ENCODE measurements at regions of chr13 and their contacts with region 1.

Region 1: GRCh38 chr13:91247768-91248167 is 99.7 kb upstream of the MIR17HG start:
- DNase-seq: peak; percentile 41 to 69 (median 58)
- H3K4me3 ChIP-seq: no peak overlapping the region
- H3K27ac ChIP-seq: no peak overlapping the region
- H3K4me1 ChIP-seq: peaks cover 16 to 68% (median 31%) of the 10 kb centered on the region in 4 experiments
- H3K27me3 ChIP-seq: no peaks in the 10 kb centered on the region

Region 2: DNA sequence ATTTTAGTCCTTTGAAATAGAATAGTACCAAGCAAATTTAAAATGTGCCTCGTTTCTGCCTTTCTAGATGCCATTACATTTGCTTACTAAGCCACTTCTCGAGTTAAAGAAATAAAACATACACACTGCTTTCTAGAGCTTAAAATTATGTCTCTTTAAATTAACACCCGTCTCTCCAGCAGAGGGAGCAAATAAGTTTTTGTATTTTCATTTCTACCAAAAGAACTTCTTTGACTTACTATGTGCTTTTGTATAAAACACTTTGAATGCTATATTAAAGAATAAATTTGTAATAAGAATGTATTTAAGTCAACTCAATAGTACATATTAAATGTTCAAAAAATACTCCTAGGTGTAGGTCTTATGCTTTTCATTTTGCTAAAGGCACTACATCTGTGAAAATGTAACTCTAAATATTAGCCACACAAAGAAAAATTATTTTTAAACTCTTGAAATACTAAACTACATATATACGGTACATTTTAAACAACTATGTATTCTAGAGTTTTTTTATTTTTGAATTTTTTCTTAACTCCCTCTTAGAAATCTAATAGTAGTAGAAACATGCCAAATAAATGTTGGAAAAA is 169.6 kb before region 1 on chr13:
- CTCF ChIA-PET with region 1: interaction called, 40 read pairs
- POLR2A ChIA-PET with region 1: no interaction called
- DNase-seq: peak; percentile 47 to 72 (median 62)
- H3K4me3 ChIP-seq: no peak overlapping the region
- H3K27ac ChIP-seq: no peak overlapping the region
- H3K4me1 ChIP-seq: no peaks in the 10 kb centered on the region
- H3K27me3 ChIP-seq: no peaks in the 10 kb centered on the region

Region 3: DNA sequence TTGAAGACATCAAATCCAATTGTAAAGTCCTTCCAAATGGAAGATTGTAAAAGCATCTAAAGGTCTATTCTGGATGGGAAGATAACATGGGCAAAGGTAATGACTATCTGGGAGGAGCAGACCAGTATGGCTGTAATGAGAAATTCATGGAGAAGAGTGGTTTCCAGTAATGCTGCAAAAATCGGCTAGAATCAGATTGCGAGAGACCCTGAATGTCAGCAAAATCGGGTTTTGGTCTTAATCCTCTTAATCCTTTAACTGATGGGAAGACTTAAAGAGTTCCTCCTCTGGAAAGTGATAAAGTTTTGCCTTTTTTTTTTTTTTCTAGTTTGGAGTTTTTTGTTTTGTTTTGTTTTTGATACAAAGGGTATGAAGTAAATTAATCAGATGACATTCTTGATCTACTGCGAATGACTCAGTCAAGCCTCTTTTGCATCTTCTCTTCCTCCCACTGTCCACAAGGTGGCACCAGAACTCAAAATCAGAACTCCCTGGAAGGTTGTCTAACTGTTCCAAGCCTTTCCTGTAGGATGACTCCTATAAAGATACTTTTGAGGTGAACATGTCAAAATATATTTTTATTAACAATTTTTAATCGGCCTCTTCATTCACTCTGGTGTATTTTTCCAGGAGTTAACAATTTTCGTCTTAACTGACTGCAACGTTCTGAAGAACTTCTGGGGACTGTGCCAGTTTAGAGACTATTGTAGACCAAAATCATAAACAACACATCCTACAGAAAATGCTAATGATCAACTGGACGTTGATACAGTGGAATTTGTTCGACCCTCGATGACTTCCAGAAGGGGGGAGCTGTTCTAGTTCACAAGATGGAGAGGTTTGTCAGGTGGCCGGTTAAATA is 113.6 kb before region 1 on chr13:
- CTCF ChIA-PET with region 1: interaction called, 47 read pairs
- POLR2A ChIA-PET with region 1: no interaction called
- DNase-seq: peak; percentile 65 to 67 (median 67)
- H3K4me3 ChIP-seq: peak overlapping the region in 4 of 7 experiments; percentile 30 to 74 (median 65)
- H3K27ac ChIP-seq: peak overlapping the region in 1 of 2 experiments; percentile 7
- H3K4me1 ChIP-seq: peaks cover 6 to 32% (median 10%) of the 10 kb centered on the region in 4 experiments
- H3K27me3 ChIP-seq: no peaks in the 10 kb centered on the region

Region 4: GRCh38 chr13:91216928-91217690 is 30.7 kb before region 1 on chr13:
- CTCF ChIA-PET with region 1: interaction called, 17 read pairs
- POLR2A ChIA-PET with region 1: interaction called, 4 read pairs
- DNase-seq: no peak
- H3K4me3 ChIP-seq: no peak overlapping the region
- H3K27ac ChIP-seq: no peak overlapping the region
- H3K4me1 ChIP-seq: peaks cover 19 to 74% (median 33%) of the 10 kb centered on the region in 4 experiments
- H3K27me3 ChIP-seq: no peaks in the 10 kb centered on the region

Region 5: DNA sequence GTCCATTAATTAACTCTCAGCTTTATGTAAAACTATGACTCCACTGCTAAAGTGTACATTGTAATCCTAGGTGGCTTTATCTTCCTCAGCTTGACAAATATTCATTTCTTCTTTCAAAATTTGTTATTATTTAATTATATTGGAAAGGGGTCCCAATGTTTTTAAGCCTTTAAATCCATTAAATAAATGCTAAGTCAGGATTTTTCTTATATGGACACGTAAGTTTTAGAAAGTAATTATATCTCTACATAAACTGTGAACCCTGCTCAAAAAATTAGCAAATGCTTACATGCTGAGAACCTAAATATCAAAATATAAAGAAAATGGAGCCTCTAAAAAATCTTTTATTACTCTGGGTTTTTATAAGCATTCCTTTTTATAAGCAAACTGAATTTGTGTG is 21.5 kb after region 1 on chr13:
- CTCF ChIA-PET with region 1: no interaction called
- POLR2A ChIA-PET with region 1: no interaction called
- DNase-seq: no peak
- H3K4me3 ChIP-seq: no peak overlapping the region
- H3K27ac ChIP-seq: no peak overlapping the region
- H3K4me1 ChIP-seq: peaks cover 0 to 15% (median 4%) of the 10 kb centered on the region in 4 experiments
- H3K27me3 ChIP-seq: no peaks in the 10 kb centered on the region